ENCODE measurements at regions of chr6 and their contacts with region 1.

Region 1: DNA sequence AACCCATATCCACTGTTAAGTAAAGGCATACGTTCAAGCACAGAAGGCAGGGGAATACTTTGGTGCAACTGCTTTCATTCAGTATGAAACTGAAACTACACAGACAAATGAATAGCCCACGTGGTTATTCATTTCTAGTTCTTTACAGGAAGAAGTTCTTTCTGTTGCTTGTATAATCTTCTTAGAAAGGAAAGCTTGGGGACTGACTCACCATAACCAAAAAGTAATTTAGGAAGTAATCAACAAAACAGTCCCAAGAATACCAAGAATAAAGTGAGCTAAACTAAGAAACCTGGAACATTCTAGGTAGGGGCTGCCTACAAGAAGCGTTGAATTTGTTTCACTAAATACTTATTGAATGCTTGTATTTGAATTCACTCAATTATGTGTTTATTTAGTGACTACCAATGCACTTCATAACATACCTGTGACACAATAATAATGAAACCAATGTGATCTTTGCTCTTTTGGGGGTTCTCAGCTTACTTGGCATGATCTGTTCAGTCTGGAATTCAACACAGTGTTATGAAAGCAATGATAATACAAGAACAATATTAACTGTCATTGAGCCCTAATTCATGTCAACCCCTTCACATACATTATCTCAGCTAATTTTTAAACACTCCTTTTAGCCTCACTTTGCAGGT is 25.1 kb upstream of the KIAA0408 start:
- DNase-seq: no peak
- H3K4me3 ChIP-seq: peak overlapping the region in 1 of 4 experiments; percentile 44; a peak in 1 of 8 replicates
- H3K27ac ChIP-seq: peak overlapping the region; percentile 90
- H3K4me1 ChIP-seq: peaks cover 0 to 31% (median 16%) of the 10 kb centered on the region in 4 experiments
- H3K27me3 ChIP-seq: no peaks in the 10 kb centered on the region
- CTCF ChIP-seq: no peak
- EP300 ChIP-seq: no peak
- POLR2A ChIP-seq: no peak
- RAD21 ChIP-seq: no peak

Region 2: DNA sequence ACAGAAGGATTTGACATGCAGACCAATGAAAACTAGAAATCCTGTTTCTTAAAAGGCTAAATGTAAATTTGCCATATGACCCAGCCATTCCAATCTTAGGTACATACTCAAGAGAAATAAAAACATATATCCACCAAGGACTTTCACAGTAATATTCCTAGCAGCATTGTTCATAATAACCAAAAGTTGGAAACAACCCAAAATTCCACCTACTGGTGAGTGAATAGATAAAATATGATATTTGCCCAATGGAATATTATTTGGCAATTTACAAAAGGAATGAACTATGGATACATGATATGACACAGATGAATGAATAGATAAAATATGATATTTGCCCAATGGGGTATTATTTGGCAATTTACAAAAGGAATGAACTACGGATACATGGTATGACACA is 12.1 kb after region 1 on chr6:
- CTCF ChIA-PET with region 1: interaction called, 10 read pairs
- POLR2A ChIA-PET with region 1: interaction called, 15 read pairs
- DNase-seq: no peak
- H3K4me3 ChIP-seq: no peak overlapping the region
- H3K27ac ChIP-seq: no peak overlapping the region
- H3K4me1 ChIP-seq: no peaks in the 10 kb centered on the region
- H3K27me3 ChIP-seq: no peaks in the 10 kb centered on the region
- CTCF ChIP-seq: no peak
- EP300 ChIP-seq: no peak
- POLR2A ChIP-seq: no peak
- RAD21 ChIP-seq: no peak